ENCODE measurements at regions of chr11 and their contacts with region 1.

Region 1: GRCh38 chr11:122076512-122077120 is 39.4 kb downstream of the BLID start:
- DNase-seq: no peak
- H3K4me3 ChIP-seq: no peak overlapping the region
- H3K27ac ChIP-seq: no peak overlapping the region
- H3K27me3 ChIP-seq: no peaks in the 10 kb centered on the region
- CTCF ChIP-seq: no peak

Region 2: GRCh38 chr11:122044086-122044485 is 32.5 kb before region 1 on chr11:
- CTCF ChIA-PET with region 1: no interaction called
- POLR2A ChIA-PET with region 1: interaction called, 11 read pairs
- DNase-seq: no peak
- H3K4me3 ChIP-seq: no peak overlapping the region
- H3K27ac ChIP-seq: no peak overlapping the region
- H3K27me3 ChIP-seq: no peaks in the 10 kb centered on the region
- CTCF ChIP-seq: no peak

Region 3: GRCh38 chr11:122209619-122210366 is 133.2 kb after region 1 on chr11:
- CTCF ChIA-PET with region 1: no interaction called
- POLR2A ChIA-PET with region 1: no interaction called
- DNase-seq: peak; percentile 59
- H3K4me3 ChIP-seq: no peak overlapping the region
- H3K27ac ChIP-seq: peak overlapping the region; percentile 63
- H3K27me3 ChIP-seq: no peaks in the 10 kb centered on the region
- CTCF ChIP-seq: no peak